ENCODE measurements at regions of chr1 and their contacts with region 1.

Region 1: DNA sequence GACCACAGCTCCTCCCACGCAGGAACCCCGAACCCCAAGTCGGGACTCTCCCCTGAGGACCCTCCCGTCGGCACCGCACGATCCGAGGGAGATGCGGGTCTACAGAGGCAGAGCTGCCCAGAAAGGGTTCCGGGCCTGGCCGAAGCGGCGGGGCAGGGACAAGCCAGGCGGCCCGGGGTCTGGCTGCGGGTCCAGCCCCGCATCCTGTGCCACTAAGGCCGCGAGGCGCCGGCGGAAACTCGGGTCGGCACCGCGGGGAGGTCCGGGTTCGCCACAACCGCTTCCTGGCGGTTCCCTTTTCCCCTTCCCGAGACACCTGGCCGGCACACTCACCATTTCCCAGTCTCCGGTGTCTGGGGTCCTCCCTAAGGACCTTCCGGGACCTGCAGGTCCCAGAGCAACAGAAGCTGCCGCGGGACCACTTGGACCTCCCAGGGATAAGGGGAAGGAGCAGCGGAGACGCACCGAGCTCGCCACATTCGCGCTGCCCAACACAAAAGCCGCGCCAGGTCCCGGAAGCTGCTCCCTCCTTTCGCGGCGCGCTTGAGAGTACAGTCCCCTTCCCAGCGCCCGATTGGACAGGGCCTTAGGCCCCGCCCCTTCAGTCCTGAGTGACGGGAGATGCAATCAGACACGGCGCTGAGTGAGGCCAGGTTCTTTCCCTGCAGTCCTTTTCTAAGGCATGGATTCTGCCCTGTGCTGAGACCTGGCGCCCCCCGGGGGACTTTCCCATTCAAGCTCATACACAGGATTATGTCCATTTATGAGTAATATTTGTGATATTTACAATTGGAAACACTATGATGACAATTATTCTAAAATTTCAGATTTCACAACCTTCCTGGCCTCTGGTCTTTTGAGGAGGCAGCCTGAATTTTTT is at the start of gene ZNF670:
- DNase-seq: peak; percentile 96
- H3K4me3 ChIP-seq: peak within 1 kb of the TSS; percentile 93
- H3K4me3 Mint-ChIP-seq: peak within 1 kb of the TSS; percentile 75
- H3K27ac Mint-ChIP-seq: peak within 1 kb of the TSS; percentile 94
- H3K4me1 ChIP-seq: peaks cover 5% of the 10 kb centered on the region; the same call in 1 of the 2 replicates
- H3K4me1 Mint-ChIP-seq: peaks cover 13% of the 10 kb centered on the region
- H3K27me3 ChIP-seq: no peaks in the 10 kb centered on the region
- H3K27me3 Mint-ChIP-seq: no peaks in the 10 kb centered on the region
- CTCF ChIP-seq: peak; percentile 13 to 37
- total RNA-seq, gene ZNF670: 5.8 and 6.0 TPM in 2 replicates

Region 2: DNA sequence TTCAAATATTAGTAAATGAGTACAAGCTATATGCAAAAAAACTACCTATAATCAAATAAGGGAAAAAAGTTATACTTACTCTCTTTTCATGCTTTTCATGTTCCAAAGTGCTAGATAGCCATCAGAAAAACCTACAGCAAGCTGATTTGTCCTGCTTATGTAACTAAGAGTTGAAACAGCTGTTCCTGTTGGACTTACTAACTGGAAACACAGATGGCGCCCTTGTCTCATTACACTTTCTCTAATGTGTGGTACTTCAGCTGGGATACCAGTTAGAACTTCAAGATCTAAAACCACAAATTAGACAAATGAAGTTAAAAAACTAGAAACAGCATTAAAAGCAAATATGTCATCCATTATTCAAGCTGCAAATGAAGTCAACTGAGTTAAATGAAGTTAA is 171.0 kb before region 1 on chr1:
- CTCF ChIA-PET with region 1: no interaction called
- POLR2A ChIA-PET with region 1: no interaction called
- intact Hi-C with region 1: loop called (anchors 1 kb)
- DNase-seq: peak in 1 of 2 experiments; percentile 50
- H3K4me3 ChIP-seq: no peak overlapping the region
- H3K4me3 Mint-ChIP-seq: no peak overlapping the region
- H3K27ac Mint-ChIP-seq: no peak overlapping the region
- H3K4me1 ChIP-seq: no peaks in the 10 kb centered on the region
- H3K4me1 Mint-ChIP-seq: no peaks in the 10 kb centered on the region
- H3K27me3 ChIP-seq: no peaks in the 10 kb centered on the region
- H3K27me3 Mint-ChIP-seq: no peaks in the 10 kb centered on the region
- CTCF ChIP-seq: peak; percentile 10 to 30

Region 3: DNA sequence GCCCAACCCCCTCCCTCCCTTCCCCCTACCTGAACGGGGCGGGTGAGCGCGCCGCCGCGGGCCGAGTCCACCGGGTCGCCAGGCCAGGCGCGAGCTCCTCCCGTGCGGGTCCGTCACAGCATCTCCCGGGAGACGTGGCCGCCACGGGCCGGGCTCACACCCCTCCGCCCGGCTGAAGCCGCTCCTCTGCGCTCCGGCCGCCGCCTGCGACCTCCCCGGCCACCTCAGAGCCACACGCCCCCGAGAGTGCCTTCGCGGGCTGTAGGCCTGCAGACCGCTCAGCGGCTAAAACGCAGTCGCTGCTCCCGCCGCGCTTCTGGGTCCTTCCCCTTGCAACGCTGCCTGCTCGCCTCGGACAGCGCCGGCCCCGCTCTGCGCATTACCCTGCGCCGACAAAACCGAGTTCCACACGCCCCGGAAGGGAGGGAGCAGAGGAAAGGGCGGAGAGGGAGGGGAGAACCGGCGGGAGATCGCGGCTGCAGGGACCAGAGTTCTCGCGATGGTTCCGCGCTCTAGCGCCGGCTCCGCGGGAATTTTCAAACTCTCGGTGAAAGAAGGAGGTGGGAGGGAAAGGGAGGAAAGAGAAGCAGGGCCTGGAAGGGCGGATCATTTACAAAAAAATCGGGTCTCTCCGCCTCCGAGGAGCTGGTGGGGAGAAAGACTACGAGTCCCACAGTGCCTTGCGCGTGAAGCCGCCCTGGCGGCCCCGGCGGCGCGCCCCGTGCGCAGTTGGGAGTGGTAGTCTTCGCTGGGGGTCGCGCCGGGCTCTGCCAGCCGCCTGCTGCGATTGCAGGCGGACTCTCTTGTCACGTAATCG is 146.7 kb before region 1 on chr1 and contains the start of gene AHCTF1:
- CTCF ChIA-PET with region 1: no interaction called
- POLR2A ChIA-PET with region 1: interaction called, 4 read pairs
- intact Hi-C with region 1: loop called (anchors 1 kb)
- DNase-seq: peak; percentile 97
- H3K4me3 ChIP-seq: peak within 1 kb of the TSS; percentile 95
- H3K4me3 Mint-ChIP-seq: peak within 1 kb of the TSS; percentile 95
- H3K27ac Mint-ChIP-seq: peak within 1 kb of the TSS; percentile 95
- H3K4me1 ChIP-seq: peaks cover 10% of the 10 kb centered on the region
- H3K4me1 Mint-ChIP-seq: peaks cover 7% of the 10 kb centered on the region
- H3K27me3 ChIP-seq: no peaks in the 10 kb centered on the region
- H3K27me3 Mint-ChIP-seq: no peaks in the 10 kb centered on the region
- CTCF ChIP-seq: no peak
- total RNA-seq, gene AHCTF1: 42.3 and 48.7 TPM in 2 replicates

Region 4: DNA sequence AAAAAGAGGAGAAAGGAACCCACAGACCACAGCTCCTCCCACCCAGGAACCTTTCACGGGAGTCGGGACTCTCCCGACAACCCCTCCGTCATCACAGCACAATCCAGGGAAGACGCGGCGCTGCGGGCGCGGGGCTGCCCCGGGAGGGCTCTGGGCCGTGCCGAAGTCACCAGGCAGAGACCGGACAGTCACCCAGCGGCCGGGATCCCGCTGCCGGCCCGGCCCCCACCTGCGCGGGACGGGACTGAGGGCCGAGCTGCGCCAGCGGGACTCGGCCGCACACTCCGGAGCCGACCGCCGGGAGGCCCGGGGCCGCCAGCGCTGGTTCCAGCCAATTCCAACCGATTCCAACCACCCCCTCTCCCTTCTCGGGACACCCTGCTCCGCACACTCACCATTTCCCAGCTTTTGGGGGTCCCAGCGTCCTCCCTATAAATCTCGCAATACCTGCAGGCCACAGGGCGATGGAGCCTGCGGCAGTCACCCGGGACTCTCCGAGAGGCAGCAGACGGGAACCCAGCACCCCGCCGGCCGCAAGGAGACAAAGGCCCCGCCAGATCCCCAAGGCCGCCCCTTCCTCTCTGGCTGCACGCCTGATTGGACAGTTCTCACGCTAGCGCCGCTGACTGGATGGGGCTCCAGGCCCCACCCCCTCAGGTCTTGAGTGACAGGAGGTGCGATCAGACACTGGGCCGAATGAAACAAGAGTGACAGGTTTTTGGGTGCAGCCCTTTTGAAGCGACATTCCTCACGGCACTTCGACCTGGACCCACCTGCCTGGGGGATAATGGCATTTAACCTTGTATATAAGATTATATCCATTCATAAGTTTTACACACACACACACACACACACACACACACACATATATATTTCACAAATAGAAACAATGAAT is 70.7 kb before region 1 on chr1 and contains the start of gene ZNF695:
- CTCF ChIA-PET with region 1: no interaction called
- POLR2A ChIA-PET with region 1: no interaction called
- intact Hi-C with region 1: loop called (anchors 1 kb)
- DNase-seq: peak; percentile 98
- H3K4me3 ChIP-seq: peak within 1 kb of the TSS; percentile 97
- H3K4me3 Mint-ChIP-seq: peak within 1 kb of the TSS; percentile 95
- H3K27ac Mint-ChIP-seq: peak within 1 kb of the TSS; percentile 99
- H3K4me1 ChIP-seq: 0 out of 2 replicates have a peak, but pooled peaks cover 5% of the 10 kb centered on the region
- H3K4me1 Mint-ChIP-seq: no peaks in the 10 kb centered on the region
- H3K27me3 ChIP-seq: no peaks in the 10 kb centered on the region
- H3K27me3 Mint-ChIP-seq: no peaks in the 10 kb centered on the region
- CTCF ChIP-seq: no peak
- total RNA-seq, gene ZNF695: 24.7 and 25.2 TPM in 2 replicates

Region 5: GRCh38 chr1:247103859-247104591 is 25.5 kb after region 1 on chr1 and contains the start of gene ZNF669:
- CTCF ChIA-PET with region 1: no interaction called
- POLR2A ChIA-PET with region 1: no interaction called
- intact Hi-C with region 1: loop called (anchors 1 kb)
- DNase-seq: peak; percentile 97 to 98
- H3K4me3 ChIP-seq: peak within 1 kb of the TSS; percentile 53
- H3K4me3 Mint-ChIP-seq: peak within 1 kb of the TSS; percentile 83
- H3K27ac Mint-ChIP-seq: peak within 1 kb of the TSS; percentile 64
- H3K4me1 ChIP-seq: no peaks in the 10 kb centered on the region
- H3K4me1 Mint-ChIP-seq: no peaks in the 10 kb centered on the region
- H3K27me3 ChIP-seq: no peaks in the 10 kb centered on the region
- H3K27me3 Mint-ChIP-seq: no peaks in the 10 kb centered on the region
- CTCF ChIP-seq: no peak
- total RNA-seq, gene ZNF669: 8.3 and 9.1 TPM in 2 replicates

Measured in Caco-2 (cell line).